ENCODE measurements at regions of chr2 and their contacts with region 1.

Region 1: DNA sequence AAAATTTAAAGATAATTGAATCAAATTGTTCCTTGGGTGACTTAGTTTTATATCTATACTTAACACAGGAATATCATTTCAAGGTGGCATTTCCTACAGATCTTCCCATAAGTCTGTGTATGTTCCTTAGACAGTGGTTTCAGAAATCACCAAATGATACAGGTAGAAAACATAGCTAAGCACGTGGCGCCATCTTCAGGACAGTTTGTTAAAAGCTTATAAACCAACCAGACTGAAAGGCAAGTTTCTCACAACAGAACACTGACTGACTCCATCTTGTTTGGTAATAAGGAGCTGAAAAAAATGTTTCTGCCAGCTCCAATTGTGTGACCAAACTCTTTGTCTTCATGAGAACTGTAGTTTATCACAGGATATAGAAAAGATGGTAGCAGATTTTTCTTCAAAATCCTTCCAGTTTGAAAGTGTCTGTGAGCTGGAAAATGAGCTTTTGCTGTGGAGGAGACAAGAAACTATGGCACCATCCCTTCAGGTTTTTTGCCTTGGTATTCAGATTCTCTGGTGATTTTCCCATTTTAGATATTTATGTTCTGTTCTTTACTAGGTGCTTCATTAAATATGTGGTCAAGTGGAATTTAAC is 34.8 kb upstream of the NEUROD1 start:
- DNase-seq: peak in 1 of 2 donors; percentile 68
- H3K4me3 ChIP-seq: no peak overlapping the region
- H3K27ac ChIP-seq: no peak overlapping the region
- H3K4me1 ChIP-seq: no peaks in the 10 kb centered on the region
- H3K27me3 ChIP-seq: no peaks in the 10 kb centered on the region
- CTCF ChIP-seq: peak; percentile 20 to 57 (median 46)

Region 2: DNA sequence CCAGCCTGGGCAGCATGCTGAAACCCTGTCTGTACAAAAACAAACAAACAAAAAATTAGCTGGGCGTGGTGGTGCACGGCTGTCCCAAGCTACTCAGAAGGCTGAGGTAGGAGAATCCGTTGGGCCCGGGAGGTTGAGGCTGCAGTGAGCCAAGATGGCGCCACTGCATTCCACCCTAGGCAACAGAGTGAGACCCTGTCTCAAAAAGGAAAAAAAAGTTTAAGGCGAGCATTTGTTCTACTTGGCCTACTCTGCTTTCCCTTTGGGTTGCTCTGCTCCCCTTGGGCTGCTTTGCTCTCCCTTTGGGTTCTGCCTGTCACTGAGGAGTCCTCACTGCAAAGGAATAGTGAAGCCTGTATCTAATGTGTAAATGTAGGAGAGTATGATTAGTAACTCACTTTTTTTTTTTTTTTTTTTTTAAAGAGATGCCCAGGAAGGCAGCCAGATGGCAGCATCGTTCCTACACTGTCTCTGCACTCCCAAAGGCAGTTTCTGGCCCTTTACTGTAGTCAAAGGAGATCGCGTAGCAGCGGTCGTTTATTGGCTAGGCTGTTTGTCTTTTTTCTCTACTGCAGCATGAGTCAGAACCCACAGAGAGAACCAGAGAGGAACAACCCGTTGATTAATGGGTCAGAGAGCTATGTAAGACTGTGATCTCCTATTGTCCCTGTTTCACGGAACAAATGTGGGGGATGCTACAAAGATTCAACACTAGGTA is 1589.7 kb before region 1 on chr2:
- intact Hi-C with region 1: loop called (anchors 2 kb)
- DNase-seq: peak in 1 of 2 donors; percentile 62
- H3K4me3 ChIP-seq: no peak overlapping the region
- H3K27ac ChIP-seq: no peak overlapping the region
- H3K4me1 ChIP-seq: no peaks in the 10 kb centered on the region
- H3K27me3 ChIP-seq: no peaks in the 10 kb centered on the region
- CTCF ChIP-seq: peak in 2 of 3 experiments; percentile 9 to 37

Region 3: DNA sequence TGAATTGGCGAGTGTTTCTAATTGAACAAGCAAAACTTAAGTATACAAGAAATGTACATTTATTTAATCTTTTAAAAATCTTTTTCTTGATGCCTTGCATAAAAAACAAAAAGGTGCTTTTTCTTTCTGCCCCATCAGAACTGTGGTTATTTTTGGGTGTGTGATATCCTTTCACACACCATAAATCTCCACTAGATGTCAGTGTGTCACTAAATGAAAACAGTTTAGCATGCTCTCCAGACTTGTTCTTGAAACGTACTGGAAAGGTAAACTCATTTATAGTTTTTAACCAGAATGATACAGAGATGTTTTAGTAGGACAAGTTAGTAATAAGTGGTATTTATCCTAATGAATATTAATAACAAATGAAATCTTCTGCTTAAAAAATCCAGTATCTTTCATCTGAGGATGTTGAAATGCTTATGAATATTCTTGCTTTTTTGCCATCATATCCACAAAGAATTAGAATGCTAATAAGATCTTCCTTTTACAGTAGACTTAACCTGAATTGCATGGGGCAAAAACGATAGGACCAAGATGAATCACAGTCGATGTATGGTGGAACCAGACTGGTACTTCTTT is 637.9 kb before region 1 on chr2:
- intact Hi-C with region 1: loop called (anchors 10 kb)
- DNase-seq: no peak
- H3K4me3 ChIP-seq: no peak overlapping the region
- H3K27ac ChIP-seq: no peak overlapping the region
- H3K4me1 ChIP-seq: no peaks in the 10 kb centered on the region
- H3K27me3 ChIP-seq: no peaks in the 10 kb centered on the region
- CTCF ChIP-seq: peak; percentile 29 to 62 (median 53)

Region 4: GRCh38 chr2:181573140-181573736 is 141.9 kb before region 1 on chr2:
- intact Hi-C with region 1: loop called (anchors 10 kb)
- DNase-seq: no peak
- H3K4me3 ChIP-seq: no peak overlapping the region
- H3K27ac ChIP-seq: no peak overlapping the region
- H3K4me1 ChIP-seq: no peaks in the 10 kb centered on the region
- H3K27me3 ChIP-seq: no peaks in the 10 kb centered on the region
- CTCF ChIP-seq: peak in 2 of 3 experiments; percentile 7 to 27

Measured in ascending aorta (tissue), 2 donors.